B cell (primary cell): ENCODE measurements at regions of chr22 and their contacts with region 1.

Region 1: GRCh38 chr22:19122143-19122751 is at the start of gene DGCR2:
- DNase-seq: peak; percentile 97
- ATAC-seq: peak; percentile 97
- H3K4me3 ChIP-seq: peak within 1 kb of the TSS; percentile 67 to 93 (median 83)
- H3K4me3 Mint-ChIP-seq: peak within 1 kb of the TSS; percentile 94
- H3K27ac ChIP-seq: peak within 1 kb of the TSS; percentile 63 to 76
- H3K27ac Mint-ChIP-seq: peak within 1 kb of the TSS; percentile 88
- H3K4me1 ChIP-seq: peaks cover 46 to 49% of the 10 kb centered on the region in 2 donors
- H3K4me1 Mint-ChIP-seq: peaks cover 45% of the 10 kb centered on the region
- H3K27me3 ChIP-seq: no peaks in the 10 kb centered on the region
- H3K27me3 Mint-ChIP-seq: no peaks in the 10 kb centered on the region
- CTCF ChIP-seq: no peak
- total RNA-seq, gene DGCR2: 49.5 and 50.4 TPM in 2 replicates

Region 2: GRCh38 chr22:19109198-19110067 is 12.8 kb before region 1 on chr22:
- CTCF ChIA-PET with region 1: interaction called, 4 read pairs
- POLR2A ChIA-PET with region 1: interaction called, 3 read pairs
- intact Hi-C with region 1: loop called (anchors 1 kb)
- DNase-seq: peak; percentile 78
- ATAC-seq: peak; percentile 95
- H3K4me3 ChIP-seq: peak overlapping the region in 3 of 5 experiments; percentile 11 to 52 (median 35)
- H3K4me3 Mint-ChIP-seq: peak overlapping the region; percentile 70
- H3K27ac ChIP-seq: peak overlapping the region; percentile 55 to 65
- H3K27ac Mint-ChIP-seq: peak overlapping the region; percentile 85
- H3K4me1 ChIP-seq: peaks cover 25 to 47% of the 10 kb centered on the region in 2 donors
- H3K4me1 Mint-ChIP-seq: peaks cover 59% of the 10 kb centered on the region
- H3K27me3 ChIP-seq: no peaks in the 10 kb centered on the region
- H3K27me3 Mint-ChIP-seq: no peaks in the 10 kb centered on the region
- CTCF ChIP-seq: no peak

Region 3: DNA sequence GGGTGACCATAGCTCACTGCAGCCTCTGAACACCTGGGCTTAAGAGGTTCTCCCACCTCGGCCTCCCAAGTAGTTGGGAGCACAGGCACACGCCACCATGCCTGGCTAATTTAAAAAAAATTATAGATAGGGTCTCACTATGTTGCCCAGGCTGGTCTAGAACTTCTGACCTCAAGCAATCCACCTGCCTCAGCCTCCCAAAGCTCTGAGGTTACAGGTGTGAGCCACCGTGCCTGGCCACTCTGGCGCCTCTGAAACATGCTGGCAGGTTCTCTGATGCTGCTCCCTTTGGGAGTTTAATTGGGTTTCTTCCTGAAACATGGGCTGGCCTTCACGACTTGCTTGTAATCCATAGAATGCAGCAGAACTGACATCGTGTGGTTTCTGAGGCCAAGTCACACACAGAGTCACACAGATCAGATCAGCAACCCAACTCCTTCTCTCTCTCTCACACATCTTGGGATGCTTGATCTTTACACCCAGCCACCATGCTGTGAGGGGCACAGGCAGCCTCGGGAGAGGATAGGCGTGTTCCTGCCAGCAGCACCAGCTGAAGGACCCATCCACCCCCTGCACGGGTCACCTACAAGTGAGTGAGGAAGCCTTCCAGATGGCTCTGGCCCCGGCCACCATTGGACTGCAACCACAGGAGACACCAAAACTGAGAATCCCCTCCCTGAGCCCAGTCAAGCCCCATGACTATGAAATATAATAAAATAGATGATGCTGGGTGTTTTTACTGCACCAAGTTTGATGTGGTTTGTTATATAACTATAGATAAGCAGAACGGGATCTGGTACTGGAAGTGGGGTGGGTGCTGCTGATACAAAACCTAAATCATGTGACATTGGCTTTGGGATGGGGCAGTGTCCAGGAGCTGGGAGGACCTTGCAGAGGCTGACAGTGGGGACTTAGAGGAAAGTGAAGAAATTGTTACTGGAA is 31.0 kb after region 1 on chr22:
- CTCF ChIA-PET with region 1: no interaction called
- POLR2A ChIA-PET with region 1: no interaction called
- intact Hi-C with region 1: no loop called
- DNase-seq: no peak
- ATAC-seq: no peak
- H3K4me3 ChIP-seq: no peak overlapping the region
- H3K4me3 Mint-ChIP-seq: no peak overlapping the region
- H3K27ac ChIP-seq: no peak overlapping the region
- H3K27ac Mint-ChIP-seq: no peak overlapping the region
- H3K4me1 ChIP-seq: peaks cover 13 to 16% of the 10 kb centered on the region in 2 donors
- H3K4me1 Mint-ChIP-seq: peaks cover 11% of the 10 kb centered on the region
- H3K27me3 ChIP-seq: peaks cover 0 to 46% (median 17%) of the 10 kb centered on the region in 4 experiments
- H3K27me3 Mint-ChIP-seq: peaks cover 35% of the 10 kb centered on the region
- CTCF ChIP-seq: no peak

Region 4: DNA sequence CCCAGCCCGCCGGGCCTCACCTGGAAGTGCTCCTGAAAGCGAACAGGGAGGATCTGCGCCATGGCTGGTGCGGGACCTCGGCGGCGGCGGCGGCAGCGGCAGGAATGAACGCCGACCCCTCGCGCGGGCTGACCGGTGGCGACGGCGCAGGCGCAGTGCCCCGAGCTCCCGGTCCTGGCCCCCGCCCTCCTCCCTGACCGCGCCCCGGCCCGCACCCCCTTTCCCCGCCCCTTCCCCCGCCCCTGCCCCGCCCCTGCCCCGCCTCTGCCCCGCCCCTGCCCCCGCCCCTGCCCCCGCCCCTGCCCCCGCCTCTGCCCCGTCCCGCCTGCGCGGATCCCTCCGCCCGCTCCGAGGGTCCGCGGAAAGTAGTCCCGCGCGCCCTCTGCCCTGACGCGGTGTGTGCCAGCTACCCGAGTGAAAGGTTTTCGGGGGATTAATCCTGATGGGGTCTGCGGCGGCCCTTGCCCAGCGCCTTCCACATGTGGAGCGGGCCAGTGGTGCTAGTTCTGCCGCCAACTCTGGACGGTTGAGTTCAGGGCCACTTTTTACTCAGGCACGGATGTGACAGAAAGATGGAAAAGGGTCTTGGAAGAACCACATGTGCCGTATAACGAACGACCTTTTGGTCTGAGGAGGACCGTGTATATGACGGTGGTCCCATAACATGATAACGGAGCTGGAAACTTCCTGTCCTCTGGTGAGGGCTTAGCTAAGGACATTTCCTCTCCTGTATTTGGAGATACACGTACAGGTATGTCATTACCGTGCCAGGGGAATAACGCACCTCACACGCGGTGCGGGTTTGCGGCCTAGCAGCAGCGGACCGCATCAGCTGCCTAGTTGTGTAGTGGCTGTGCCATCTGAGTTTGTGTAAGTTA is 169.6 kb after region 1 on chr22 and contains the start of gene CLTCL1:
- CTCF ChIA-PET with region 1: no interaction called
- POLR2A ChIA-PET with region 1: no interaction called
- intact Hi-C with region 1: loop called (anchors 1 kb)
- DNase-seq: peak; percentile 87
- ATAC-seq: peak; percentile 83
- H3K4me3 ChIP-seq: peak within 1 kb of the TSS; percentile 64 to 88 (median 84)
- H3K4me3 Mint-ChIP-seq: peak within 1 kb of the TSS; percentile 97
- H3K27ac ChIP-seq: peak within 1 kb of the TSS; percentile 75 to 77
- H3K27ac Mint-ChIP-seq: peak within 1 kb of the TSS; percentile 94
- H3K4me1 ChIP-seq: peaks cover 15 to 17% of the 10 kb centered on the region in 2 donors
- H3K4me1 Mint-ChIP-seq: peaks cover 24% of the 10 kb centered on the region
- H3K27me3 ChIP-seq: peaks cover 0 to 13% (median 3%) of the 10 kb centered on the region in 4 experiments
- H3K27me3 Mint-ChIP-seq: peaks cover 18% of the 10 kb centered on the region
- CTCF ChIP-seq: no peak
- total RNA-seq, gene CLTCL1: 5.2 and 5.5 TPM in 2 replicates